Activated naive CD4-positive, alpha-beta T cell treated with anti-CD3 and anti-CD28 coated beads for 36 hours (primary cell): ENCODE measurements at regions of chr17 and their contacts with region 1.

Region 1: GRCh38 chr17:80892019-80892855 is 99.4 kb upstream of the CHMP6 start:
- DNase-seq: peak; percentile 97
- H3K4me3 Mint-ChIP-seq: peak overlapping the region; percentile 23
- H3K27ac Mint-ChIP-seq: peak overlapping the region; percentile 93
- H3K4me1 Mint-ChIP-seq: peaks cover 63% of the 10 kb centered on the region
- H3K27me3 Mint-ChIP-seq: no peaks in the 10 kb centered on the region

Region 2: GRCh38 chr17:79997011-79997660 is 895.1 kb before region 1 on chr17:
- CTCF ChIA-PET with region 1: no interaction called
- intact Hi-C with region 1: loop called (anchors 5 kb)
- DNase-seq: peak; percentile 92
- H3K4me3 Mint-ChIP-seq: peak overlapping the region; percentile 68
- H3K27ac Mint-ChIP-seq: peak overlapping the region; percentile 97
- H3K4me1 Mint-ChIP-seq: peaks cover 59% of the 10 kb centered on the region
- H3K27me3 Mint-ChIP-seq: no peaks in the 10 kb centered on the region

Region 3: DNA sequence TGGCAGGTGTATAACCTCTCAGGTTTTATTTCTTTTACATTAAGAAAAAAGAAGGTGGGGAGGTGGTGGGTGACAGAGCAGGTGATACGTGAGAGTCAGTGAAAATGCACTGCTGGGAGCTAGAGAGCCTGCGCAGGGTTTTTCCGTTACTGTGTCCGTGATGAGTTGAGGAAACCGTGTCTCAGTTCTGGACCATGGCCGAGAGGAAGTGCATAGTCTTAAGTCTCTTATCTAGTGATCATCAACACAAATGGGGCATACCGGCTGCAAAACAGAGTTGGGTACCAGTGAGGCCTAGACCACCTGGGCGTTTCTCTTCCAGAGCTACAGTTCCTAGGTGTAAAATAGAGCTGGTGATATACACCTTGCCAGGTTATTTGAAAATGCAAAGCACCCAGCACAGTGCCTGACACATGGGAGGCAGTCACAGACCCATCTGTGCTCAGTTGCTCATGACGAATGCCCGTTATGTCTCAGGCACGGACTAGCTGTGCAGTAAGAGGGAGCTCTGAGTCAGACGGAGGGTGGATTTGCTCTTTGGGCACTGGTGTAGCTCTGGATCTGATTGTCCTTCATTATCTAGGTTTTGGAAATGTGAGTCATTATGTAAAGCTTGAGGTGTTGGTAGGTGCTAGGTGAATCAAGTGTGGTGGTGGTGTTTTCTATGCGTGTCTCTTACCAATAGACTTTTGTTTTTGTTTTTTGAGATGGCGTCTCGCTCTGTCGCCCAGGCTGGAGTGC is 286.7 kb before region 1 on chr17:
- CTCF ChIA-PET with region 1: no interaction called
- intact Hi-C with region 1: loop called (anchors 5 kb)
- DNase-seq: peak; percentile 82
- H3K4me3 Mint-ChIP-seq: no peak overlapping the region
- H3K27ac Mint-ChIP-seq: peak overlapping the region; percentile 69
- H3K4me1 Mint-ChIP-seq: peaks cover 64% of the 10 kb centered on the region
- H3K27me3 Mint-ChIP-seq: no peaks in the 10 kb centered on the region

Region 4: DNA sequence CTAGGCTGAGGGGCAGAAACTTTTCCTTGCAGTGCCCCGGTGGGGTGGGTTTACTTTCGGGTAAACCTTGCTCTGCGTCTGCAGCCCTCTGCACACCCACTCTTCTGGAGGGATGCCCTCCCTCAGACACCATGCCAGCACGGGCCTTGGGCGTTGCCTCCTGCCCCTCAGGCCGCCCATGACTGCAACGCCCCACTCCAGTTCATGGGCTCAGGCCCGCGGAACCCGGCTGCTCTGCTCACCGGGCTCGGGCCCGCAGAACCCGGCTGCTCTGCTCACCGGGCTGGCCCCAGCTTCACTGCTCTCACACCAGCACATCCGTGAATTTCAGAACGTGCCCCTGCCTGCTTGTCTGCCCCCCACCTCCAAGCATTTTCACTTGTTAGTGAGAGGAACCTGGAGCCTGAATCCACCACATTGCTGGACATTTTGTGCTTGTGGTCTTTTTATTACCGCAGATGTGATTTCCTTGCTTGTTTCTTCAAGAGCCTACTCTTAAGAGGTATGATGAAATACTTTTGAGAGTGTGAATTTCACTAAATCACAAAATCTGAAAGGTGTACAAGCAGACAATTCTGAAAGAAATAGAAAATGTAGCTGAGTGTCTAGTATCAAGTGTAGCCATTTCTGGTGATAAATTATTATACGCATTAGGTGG is 216.7 kb before region 1 on chr17:
- CTCF ChIA-PET with region 1: no interaction called
- intact Hi-C with region 1: loop called (anchors 5 kb)
- DNase-seq: no peak
- H3K4me3 Mint-ChIP-seq: no peak overlapping the region
- H3K27ac Mint-ChIP-seq: no peak overlapping the region
- H3K4me1 Mint-ChIP-seq: peaks cover 70% of the 10 kb centered on the region
- H3K27me3 Mint-ChIP-seq: no peaks in the 10 kb centered on the region

Region 5: GRCh38 chr17:80761110-80761871 is 130.9 kb before region 1 on chr17:
- CTCF ChIA-PET with region 1: interaction called, 3 read pairs
- intact Hi-C with region 1: loop called (anchors 1 kb)
- DNase-seq: peak; percentile 84
- H3K4me3 Mint-ChIP-seq: peak overlapping the region; percentile 56
- H3K27ac Mint-ChIP-seq: peak overlapping the region; percentile 97
- H3K4me1 Mint-ChIP-seq: peaks cover 73% of the 10 kb centered on the region
- H3K27me3 Mint-ChIP-seq: no peaks in the 10 kb centered on the region

Region 6: DNA sequence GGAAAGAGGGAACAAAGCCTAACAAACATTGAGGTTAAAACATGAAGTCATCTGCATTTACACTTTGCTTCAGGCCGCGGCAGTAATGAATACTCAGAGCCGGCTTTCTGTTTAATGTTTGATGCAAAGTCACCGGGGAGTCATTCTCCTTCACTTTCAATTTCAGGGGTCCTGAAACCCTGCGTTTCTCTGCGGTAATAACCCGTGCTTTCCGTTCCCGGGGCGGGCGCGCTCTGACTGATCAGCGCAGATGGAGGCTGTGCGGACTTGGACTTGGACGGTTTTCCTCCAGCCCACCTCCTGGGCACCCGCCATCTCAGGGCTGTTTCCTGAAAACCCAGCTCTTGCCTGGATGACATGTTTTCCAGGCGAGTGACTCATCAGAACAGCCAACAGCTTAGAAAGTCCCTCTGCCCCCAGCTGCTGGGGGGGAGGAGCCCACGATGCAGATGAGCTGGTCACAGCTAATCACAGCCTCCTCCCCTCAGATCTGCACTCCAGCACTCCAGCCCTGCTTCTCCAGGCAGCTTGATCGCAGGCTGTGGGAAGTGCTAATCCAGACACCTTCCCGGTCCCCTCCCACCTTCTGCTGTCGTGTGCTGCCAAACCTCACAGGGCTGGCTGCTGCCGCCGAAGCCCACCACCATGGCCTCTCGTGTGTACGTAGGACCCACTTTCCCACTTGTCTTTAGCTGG is 59.2 kb before region 1 on chr17:
- CTCF ChIA-PET with region 1: interaction called, 3 read pairs
- intact Hi-C with region 1: loop called (anchors 1 kb)
- DNase-seq: peak; percentile 91
- H3K4me3 Mint-ChIP-seq: peak overlapping the region; percentile 77
- H3K27ac Mint-ChIP-seq: peak overlapping the region; percentile 96
- H3K4me1 Mint-ChIP-seq: peaks cover 44% of the 10 kb centered on the region
- H3K27me3 Mint-ChIP-seq: no peaks in the 10 kb centered on the region

Region 7: DNA sequence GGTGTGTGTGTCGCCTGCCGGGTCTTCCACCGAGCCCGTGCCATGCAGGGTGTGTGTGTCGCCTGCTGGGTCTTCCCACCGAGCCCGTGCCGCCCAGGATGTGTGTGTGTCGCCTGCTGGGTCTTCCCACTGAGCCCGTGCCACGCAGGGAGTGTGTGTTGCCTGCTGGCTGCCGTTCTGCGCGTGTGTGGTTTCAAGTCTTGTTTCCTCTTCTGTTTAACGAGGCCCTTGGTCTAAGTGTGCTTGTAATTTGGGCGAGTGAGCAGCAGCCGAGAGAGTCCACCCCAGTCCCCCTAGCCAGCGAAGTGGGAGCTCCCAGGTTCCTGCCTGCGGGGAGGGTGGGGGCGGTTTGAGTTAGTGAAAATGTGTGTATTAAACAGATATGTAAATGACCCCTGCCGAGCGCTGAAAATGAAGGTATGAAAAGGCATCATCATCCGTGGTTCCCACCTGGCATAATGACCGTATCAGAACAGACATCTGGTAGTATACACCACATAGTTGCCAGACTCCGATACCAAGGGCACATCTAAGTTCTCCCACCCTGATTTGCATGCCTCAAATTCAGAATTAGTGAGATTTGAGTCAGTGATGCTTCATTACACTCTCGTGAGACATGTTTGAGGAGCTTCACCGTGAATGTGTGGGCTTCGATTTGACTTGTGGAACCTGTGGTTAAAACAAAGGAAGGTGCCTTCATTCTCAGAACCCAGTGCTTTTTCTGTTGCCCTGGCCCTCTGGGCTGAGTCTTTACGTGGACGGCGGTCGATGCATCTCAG is 15.1 kb before region 1 on chr17:
- CTCF ChIA-PET with region 1: interaction called, 5 read pairs
- intact Hi-C with region 1: loop called (anchors 1 kb)
- DNase-seq: peak; percentile 85
- H3K4me3 Mint-ChIP-seq: peak overlapping the region; percentile 64
- H3K27ac Mint-ChIP-seq: peak overlapping the region; percentile 96
- H3K4me1 Mint-ChIP-seq: peaks cover 51% of the 10 kb centered on the region
- H3K27me3 Mint-ChIP-seq: no peaks in the 10 kb centered on the region

Region 8: GRCh38 chr17:81071761-81072741 is 179.8 kb after region 1 on chr17:
- CTCF ChIA-PET with region 1: no interaction called
- intact Hi-C with region 1: no loop called
- DNase-seq: no peak
- H3K4me3 Mint-ChIP-seq: no peak overlapping the region
- H3K27ac Mint-ChIP-seq: no peak overlapping the region
- H3K4me1 Mint-ChIP-seq: no peaks in the 10 kb centered on the region
- H3K27me3 Mint-ChIP-seq: no peaks in the 10 kb centered on the region